Caco-2 (cell line): ENCODE measurements at regions of chrX and their contacts with region 1.

Region 1: DNA sequence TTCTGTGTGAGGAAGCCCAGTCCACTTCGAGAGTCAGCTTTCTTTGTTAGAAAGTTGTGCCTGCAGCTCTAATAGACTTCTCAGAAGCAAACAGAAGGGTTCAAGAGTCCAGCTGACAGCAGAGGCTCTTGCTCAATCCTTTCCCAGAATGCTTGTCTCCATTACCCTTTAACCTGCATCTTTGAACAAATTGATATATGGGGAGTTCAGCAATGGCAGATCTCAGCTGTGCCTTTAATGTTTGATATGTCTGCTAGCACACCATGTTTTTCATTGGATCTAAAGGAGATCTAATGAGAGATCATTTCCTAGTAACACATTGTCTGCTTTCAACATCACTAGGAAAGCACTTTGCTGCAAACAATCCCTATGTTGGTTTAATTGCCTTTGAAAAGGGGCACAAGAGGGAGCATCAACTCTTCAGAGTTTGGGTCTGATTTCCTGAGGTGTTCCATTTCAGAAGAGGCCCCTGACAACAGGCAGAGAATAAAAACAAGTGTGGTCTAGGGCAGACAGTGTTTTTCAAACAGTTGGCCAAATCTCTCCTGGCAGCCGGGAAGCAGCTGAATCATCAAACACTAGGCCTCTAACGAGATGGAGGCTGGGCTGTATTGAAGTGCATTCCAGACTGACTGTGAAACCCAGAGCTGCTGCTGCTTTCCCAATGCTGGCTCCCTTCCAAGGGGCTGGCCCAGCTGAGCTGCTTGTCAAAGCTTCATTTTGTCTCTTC is 55.5 kb downstream of the LUZP4 start:
- DNase-seq: peak; percentile 71 to 82
- H3K4me3 ChIP-seq: no peak overlapping the region
- H3K4me3 Mint-ChIP-seq: peak overlapping the region; percentile 14
- H3K27ac Mint-ChIP-seq: peak overlapping the region; percentile 81
- H3K4me1 ChIP-seq: peaks cover 28% of the 10 kb centered on the region
- H3K4me1 Mint-ChIP-seq: peaks cover 10% of the 10 kb centered on the region
- H3K27me3 ChIP-seq: no peaks in the 10 kb centered on the region
- H3K27me3 Mint-ChIP-seq: no peaks in the 10 kb centered on the region
- CTCF ChIP-seq: no peak

Region 2: DNA sequence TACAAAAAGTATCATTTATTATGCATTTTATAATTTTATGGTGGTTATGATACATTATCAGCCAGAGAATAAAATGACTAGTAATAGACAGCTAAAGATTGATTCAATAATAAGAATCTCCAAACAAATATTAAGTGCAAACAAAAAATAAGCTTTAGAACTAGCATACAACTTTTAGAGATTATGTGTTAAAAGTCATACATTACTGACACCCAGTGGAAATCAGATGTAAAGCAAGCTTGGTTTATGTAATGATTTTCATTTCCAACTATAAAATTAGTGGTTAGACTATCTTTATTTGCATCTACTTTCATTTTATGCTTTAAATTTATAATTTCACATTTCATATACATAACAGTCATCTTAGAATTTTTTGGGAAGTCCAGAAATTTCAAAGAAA is 385.3 kb before region 1 on chrX:
- CTCF ChIA-PET with region 1: no interaction called
- POLR2A ChIA-PET with region 1: no interaction called
- intact Hi-C with region 1: no loop called
- DNase-seq: no peak
- H3K4me3 ChIP-seq: no peak overlapping the region
- H3K4me3 Mint-ChIP-seq: no peak overlapping the region
- H3K27ac Mint-ChIP-seq: no peak overlapping the region
- H3K4me1 ChIP-seq: no peaks in the 10 kb centered on the region
- H3K4me1 Mint-ChIP-seq: no peaks in the 10 kb centered on the region
- H3K27me3 ChIP-seq: no peaks in the 10 kb centered on the region
- H3K27me3 Mint-ChIP-seq: no peaks in the 10 kb centered on the region
- CTCF ChIP-seq: peak; percentile 6 to 20

Region 3: DNA sequence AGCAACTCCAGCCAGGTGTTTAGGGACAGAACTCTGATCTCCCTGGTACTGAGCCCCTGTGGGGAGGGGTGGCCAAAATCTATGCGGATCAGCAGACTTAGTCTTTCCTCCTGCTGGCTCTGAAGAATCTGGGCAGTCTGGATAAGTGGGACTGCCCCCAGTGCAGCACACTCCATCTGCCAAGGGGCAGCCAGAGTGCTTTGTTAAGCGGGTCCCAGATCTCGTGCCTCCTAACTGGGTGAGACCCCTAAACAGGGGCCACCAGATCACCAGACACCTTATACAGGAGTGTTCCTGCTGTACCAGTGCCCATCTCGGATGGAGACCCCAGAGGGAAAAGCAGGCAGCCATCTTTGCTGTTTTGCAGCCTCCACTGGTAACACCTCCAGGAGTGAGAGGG is 246.2 kb before region 1 on chrX:
- CTCF ChIA-PET with region 1: no interaction called
- POLR2A ChIA-PET with region 1: no interaction called
- intact Hi-C with region 1: no loop called
- DNase-seq: no peak
- H3K4me3 ChIP-seq: no peak overlapping the region
- H3K4me3 Mint-ChIP-seq: no peak overlapping the region
- H3K27ac Mint-ChIP-seq: no peak overlapping the region
- H3K4me1 ChIP-seq: no peaks in the 10 kb centered on the region
- H3K4me1 Mint-ChIP-seq: no peaks in the 10 kb centered on the region
- H3K27me3 ChIP-seq: no peaks in the 10 kb centered on the region
- H3K27me3 Mint-ChIP-seq: no peaks in the 10 kb centered on the region
- CTCF ChIP-seq: no peak

Region 4: GRCh38 chrX:115284877-115285276 is 60.2 kb before region 1 on chrX:
- CTCF ChIA-PET with region 1: no interaction called
- POLR2A ChIA-PET with region 1: no interaction called
- intact Hi-C with region 1: no loop called
- DNase-seq: no peak
- H3K4me3 ChIP-seq: no peak overlapping the region
- H3K4me3 Mint-ChIP-seq: no peak overlapping the region
- H3K27ac Mint-ChIP-seq: no peak overlapping the region
- H3K4me1 ChIP-seq: no peaks in the 10 kb centered on the region
- H3K4me1 Mint-ChIP-seq: no peaks in the 10 kb centered on the region
- H3K27me3 ChIP-seq: no peaks in the 10 kb centered on the region
- H3K27me3 Mint-ChIP-seq: peaks cover 6% of the 10 kb centered on the region
- CTCF ChIP-seq: no peak

Region 5: DNA sequence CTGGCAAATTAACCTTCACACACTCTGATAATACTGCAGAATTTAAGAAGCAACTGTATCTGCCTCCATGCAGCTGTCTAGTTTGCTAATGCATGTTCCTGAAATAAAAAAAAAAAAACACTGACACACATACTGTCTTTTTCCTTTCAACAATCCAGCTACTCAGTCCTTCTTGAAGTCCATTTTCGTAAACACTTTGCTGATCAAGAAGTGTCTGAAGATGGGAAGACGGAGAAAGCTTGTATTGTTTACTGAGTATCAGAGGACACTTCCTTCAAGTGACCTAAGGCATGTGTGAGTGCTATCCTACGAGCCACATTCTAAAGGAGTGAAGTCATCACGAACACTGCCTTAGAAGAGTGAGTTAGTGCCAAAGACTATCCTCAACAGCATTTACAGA is 27.1 kb after region 1 on chrX:
- CTCF ChIA-PET with region 1: no interaction called
- POLR2A ChIA-PET with region 1: no interaction called
- intact Hi-C with region 1: loop called (anchors 2 kb)
- DNase-seq: no peak
- H3K4me3 ChIP-seq: no peak overlapping the region
- H3K4me3 Mint-ChIP-seq: peak overlapping the region; percentile 46
- H3K27ac Mint-ChIP-seq: peak overlapping the region; percentile 88
- H3K4me1 ChIP-seq: peaks cover 23% of the 10 kb centered on the region
- H3K4me1 Mint-ChIP-seq: peaks cover 8% of the 10 kb centered on the region
- H3K27me3 ChIP-seq: no peaks in the 10 kb centered on the region
- H3K27me3 Mint-ChIP-seq: no peaks in the 10 kb centered on the region
- CTCF ChIP-seq: no peak

Region 6: DNA sequence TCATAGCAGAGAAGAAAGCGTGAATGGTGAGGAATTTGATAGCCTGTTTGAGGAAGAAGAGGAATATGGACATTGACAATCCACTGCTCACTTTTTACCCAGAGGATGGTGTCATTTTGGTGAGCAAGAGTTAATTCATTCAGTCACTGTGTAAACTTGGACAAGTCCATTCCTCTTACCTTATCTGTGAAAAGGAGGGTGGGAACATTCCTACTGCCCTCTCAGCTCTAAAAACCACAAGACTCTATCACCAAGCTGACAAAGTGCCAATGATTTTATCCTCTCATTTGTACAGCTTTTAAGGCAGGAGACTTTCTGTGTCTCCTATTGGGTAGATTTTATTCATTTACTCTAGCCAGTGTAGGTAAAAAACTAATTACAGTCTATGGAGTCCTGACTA is 48.2 kb after region 1 on chrX:
- CTCF ChIA-PET with region 1: no interaction called
- POLR2A ChIA-PET with region 1: interaction called, 4 read pairs
- intact Hi-C with region 1: loop called (anchors 2 kb)
- DNase-seq: peak; percentile 32 to 34
- H3K4me3 ChIP-seq: no peak overlapping the region
- H3K4me3 Mint-ChIP-seq: peak overlapping the region; percentile 39
- H3K27ac Mint-ChIP-seq: peak overlapping the region; percentile 48
- H3K4me1 ChIP-seq: peaks cover 23% of the 10 kb centered on the region
- H3K4me1 Mint-ChIP-seq: peaks cover 17% of the 10 kb centered on the region
- H3K27me3 ChIP-seq: no peaks in the 10 kb centered on the region
- H3K27me3 Mint-ChIP-seq: no peaks in the 10 kb centered on the region
- CTCF ChIP-seq: no peak

Region 7: GRCh38 chrX:115408771-115409400 is 63.8 kb after region 1 on chrX:
- CTCF ChIA-PET with region 1: no interaction called
- POLR2A ChIA-PET with region 1: no interaction called
- intact Hi-C with region 1: loop called (anchors 2 kb)
- DNase-seq: no peak
- H3K4me3 ChIP-seq: no peak overlapping the region
- H3K4me3 Mint-ChIP-seq: no peak overlapping the region
- H3K27ac Mint-ChIP-seq: no peak overlapping the region
- H3K4me1 ChIP-seq: peaks cover 50% of the 10 kb centered on the region
- H3K4me1 Mint-ChIP-seq: peaks cover 22% of the 10 kb centered on the region
- H3K27me3 ChIP-seq: no peaks in the 10 kb centered on the region
- H3K27me3 Mint-ChIP-seq: no peaks in the 10 kb centered on the region
- CTCF ChIP-seq: no peak

Region 8: DNA sequence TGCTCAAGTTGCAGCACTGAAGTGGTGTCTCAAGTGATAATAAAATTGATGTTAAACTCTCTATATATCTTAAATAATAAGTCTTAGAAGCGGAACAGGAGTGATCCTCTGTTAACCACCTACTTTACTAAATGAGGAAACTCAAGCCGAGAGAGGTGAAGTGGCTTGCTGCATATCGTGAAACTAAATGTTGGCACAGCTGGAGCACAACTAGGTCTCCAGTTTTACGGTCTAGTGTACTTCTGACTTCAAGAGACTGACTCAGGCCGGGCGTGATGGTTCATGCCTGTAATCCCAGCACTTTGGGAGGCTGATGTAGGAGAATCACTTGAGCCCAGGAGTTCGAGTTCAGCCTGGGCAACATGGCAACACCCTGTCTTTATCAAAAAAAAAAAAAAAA is 180.4 kb after region 1 on chrX:
- CTCF ChIA-PET with region 1: no interaction called
- POLR2A ChIA-PET with region 1: no interaction called
- intact Hi-C with region 1: no loop called
- DNase-seq: no peak
- H3K4me3 ChIP-seq: no peak overlapping the region
- H3K4me3 Mint-ChIP-seq: no peak overlapping the region
- H3K27ac Mint-ChIP-seq: no peak overlapping the region
- H3K4me1 ChIP-seq: no peaks in the 10 kb centered on the region
- H3K4me1 Mint-ChIP-seq: no peaks in the 10 kb centered on the region
- H3K27me3 ChIP-seq: no peaks in the 10 kb centered on the region
- H3K27me3 Mint-ChIP-seq: no peaks in the 10 kb centered on the region
- CTCF ChIP-seq: no peak

Region 9: GRCh38 chrX:115560978-115561604 is 216.0 kb after region 1 on chrX and contains the start of gene PLS3:
- CTCF ChIA-PET with region 1: no interaction called
- POLR2A ChIA-PET with region 1: interaction called, 10 read pairs
- intact Hi-C with region 1: no loop called
- DNase-seq: peak; percentile 86 to 92
- H3K4me3 ChIP-seq: peak within 1 kb of the TSS; percentile 85
- H3K4me3 Mint-ChIP-seq: peak within 1 kb of the TSS; percentile 90
- H3K27ac Mint-ChIP-seq: peak within 1 kb of the TSS; percentile 94
- H3K4me1 ChIP-seq: peaks cover 18% of the 10 kb centered on the region
- H3K4me1 Mint-ChIP-seq: no peaks in the 10 kb centered on the region
- H3K27me3 ChIP-seq: no peaks in the 10 kb centered on the region
- H3K27me3 Mint-ChIP-seq: no peaks in the 10 kb centered on the region
- CTCF ChIP-seq: no peak
- total RNA-seq, gene PLS3: 211 and 213 TPM in 2 replicates